Activated T-helper 1 cell treated with anti-CD3 and anti-CD28 coated beads, Interleukin-12 subunit alpha, Interleukin-12 subunit beta, Interleukin-2, Interleukin-4 antibody, amounts not matched to agents 30 ng/mL and 10 ng/mL and 1 ng/mL, durations not matched to agents 14 hours and 24 hours and 36 hours (primary cell): ENCODE measurements at regions of chr7 and their contacts with region 1.

Region 1: DNA sequence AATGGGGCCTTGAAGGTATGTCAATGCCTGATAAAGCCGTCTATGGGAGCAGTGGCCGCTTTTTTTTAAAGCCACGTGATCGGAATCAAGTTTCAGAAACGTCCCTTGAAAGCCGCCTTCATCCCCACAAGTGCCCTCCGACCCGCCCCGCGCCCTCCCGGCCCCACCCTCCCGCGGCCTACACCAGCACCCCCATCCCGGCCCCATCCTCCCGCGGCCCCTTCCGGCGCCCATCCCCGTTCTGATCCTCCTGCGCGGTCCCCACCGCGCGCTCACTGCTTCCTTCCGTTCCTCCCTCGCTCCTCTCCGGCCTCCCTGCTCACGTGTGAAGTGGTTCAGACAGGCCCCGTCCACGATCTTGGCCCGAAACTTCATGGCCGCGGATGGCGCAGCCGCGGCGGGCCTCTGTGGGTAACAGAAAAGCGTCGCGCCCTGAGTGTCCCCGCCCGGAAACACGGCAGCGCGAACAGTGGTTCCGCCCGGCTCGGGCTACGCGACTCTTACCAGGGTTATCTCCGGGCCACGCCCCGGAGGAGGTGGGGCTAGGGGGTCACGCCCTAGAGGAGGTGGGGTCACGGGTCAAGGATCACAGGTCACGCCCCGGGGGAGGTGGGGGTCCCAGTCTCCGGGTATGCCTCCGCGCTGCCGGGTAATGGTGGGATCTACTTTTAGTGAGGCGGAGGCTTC is at the start of gene HUS1:
- DNase-seq: peak; percentile 88
- H3K4me3 Mint-ChIP-seq: peak within 1 kb of the TSS; percentile 90
- H3K27ac Mint-ChIP-seq: peak within 1 kb of the TSS; percentile 96
- H3K4me1 Mint-ChIP-seq: peaks cover 24% of the 10 kb centered on the region
- H3K27me3 Mint-ChIP-seq: peaks cover 5% of the 10 kb centered on the region
- total RNA-seq, gene HUS1: 34.4 and 36.4 TPM in 2 replicates

Region 2: DNA sequence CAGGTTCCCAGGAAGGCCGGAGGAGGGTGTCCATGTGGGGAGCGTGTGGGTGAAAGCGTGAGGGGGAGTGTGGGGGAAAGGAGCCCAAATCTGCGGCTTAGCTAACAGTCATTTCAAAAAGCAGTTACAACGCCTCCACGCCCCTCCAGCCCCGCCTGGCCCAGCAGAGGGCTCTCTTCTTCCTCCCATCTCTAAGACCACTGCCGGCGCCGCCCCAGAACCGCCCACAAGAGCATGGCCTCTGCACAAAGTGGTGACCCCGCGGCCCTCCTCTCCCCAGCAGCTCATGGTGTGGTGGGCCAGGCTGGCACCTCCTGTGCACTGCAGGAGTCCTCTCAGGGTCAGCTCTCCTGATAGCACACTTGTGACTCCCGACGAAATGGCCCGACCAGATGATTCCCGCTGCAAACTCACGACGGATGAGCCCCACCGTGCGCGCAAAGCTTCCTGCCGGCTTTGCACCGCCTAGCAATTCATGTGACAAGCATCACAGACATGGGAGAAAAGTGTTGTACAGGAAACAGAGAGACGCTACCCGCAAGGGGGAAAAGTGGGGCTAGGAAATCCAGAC is 12.5 kb after region 1 on chr7:
- intact Hi-C with region 1: loop called (anchors 1 kb)
- DNase-seq: peak; percentile 80
- H3K4me3 Mint-ChIP-seq: peak overlapping the region; percentile 80
- H3K27ac Mint-ChIP-seq: peak overlapping the region; percentile 80
- H3K4me1 Mint-ChIP-seq: peaks cover 17% of the 10 kb centered on the region
- H3K27me3 Mint-ChIP-seq: peaks cover 6% of the 10 kb centered on the region

Region 3: DNA sequence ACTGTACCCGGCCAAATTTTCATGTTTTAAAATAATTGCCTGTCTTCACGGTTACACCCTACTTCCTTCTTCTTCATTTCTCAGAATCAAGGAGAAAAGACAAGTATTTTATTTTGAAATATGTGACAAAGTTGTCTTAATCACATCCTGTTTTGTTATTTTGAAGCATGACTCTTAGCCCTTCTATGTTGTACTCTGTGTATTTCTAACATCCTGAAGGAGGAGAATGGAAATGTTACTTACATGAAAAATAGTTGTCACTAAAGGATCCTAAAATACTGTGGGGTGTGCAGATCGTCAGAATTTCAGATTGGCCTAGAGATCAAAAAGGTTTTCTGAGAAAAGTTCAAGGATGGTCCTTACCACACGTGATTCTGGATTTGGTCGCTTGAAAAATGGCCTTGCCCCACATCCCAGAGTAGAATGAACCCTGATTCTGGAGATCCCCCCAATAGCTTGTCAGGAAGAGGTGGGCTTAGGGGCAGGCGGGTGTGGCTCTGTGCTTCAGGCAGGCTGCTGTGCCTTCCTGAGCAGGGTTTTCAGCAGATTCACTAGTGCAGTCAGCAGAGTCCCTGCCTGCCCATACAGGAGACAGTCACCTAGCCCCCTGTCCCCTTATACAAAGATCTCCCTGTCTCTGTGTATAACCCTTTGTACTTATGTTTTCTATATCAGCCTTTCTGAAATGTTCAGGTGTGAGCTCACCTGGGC is 118.4 kb after region 1 on chr7:
- intact Hi-C with region 1: loop called (anchors 2 kb)
- DNase-seq: peak; percentile 39
- H3K4me3 Mint-ChIP-seq: peak overlapping the region; percentile 42
- H3K27ac Mint-ChIP-seq: peak overlapping the region; percentile 92
- H3K4me1 Mint-ChIP-seq: peaks cover 75% of the 10 kb centered on the region
- H3K27me3 Mint-ChIP-seq: no peaks in the 10 kb centered on the region